ENCODE measurements at regions of chr11 and their contacts with region 1.

Region 1: GRCh38 chr11:18994860-18995259 is 55.6 kb upstream of the MRGPRX1 start:
- DNase-seq: no peak
- H3K4me3 ChIP-seq: no peak overlapping the region
- H3K27ac ChIP-seq: no peak overlapping the region
- H3K4me1 ChIP-seq: no peaks in the 10 kb centered on the region
- H3K27me3 ChIP-seq: 0 out of 2 replicates have a peak, but pooled peaks cover 14% of the 10 kb centered on the region
- CTCF ChIP-seq: no peak

Region 2: DNA sequence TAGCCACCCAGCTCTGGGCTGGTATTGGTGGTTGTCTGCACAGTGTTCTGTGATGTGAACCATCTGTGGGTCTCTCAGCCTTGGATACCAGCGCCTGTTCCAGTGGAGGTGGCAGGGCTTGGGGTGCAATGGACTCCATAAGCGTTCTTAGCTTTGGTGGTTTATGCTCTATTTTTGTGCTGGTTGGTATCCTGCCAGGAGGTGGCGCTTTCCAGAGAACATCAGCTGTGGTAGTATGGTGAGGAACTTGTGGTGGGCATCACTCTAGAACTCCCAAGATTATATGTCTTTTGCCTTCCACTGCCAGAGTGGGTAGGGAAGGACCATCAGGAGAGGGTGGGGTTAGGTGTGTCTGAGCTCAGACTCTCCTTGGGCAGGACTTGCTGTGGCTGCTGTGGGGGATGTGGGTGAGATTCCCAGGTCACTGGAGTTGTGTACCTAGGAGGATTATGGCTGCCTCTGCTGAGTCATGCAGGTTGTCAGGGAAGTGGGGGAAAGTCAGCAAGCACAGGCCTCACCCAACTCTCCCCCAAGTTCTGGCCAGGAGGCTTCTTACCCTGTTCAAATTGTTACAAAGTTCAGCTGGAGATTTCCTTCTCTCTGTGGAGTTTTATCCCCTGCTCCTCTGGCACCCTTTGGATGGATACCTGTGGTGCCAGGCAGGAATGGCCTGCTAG is 18.5 kb after region 1 on chr11:
- CTCF ChIA-PET with region 1: no interaction called
- POLR2A ChIA-PET with region 1: no interaction called
- intact Hi-C with region 1: loop called (anchors 2 kb)
- DNase-seq: peak; percentile 8 to 38
- H3K4me3 ChIP-seq: no peak overlapping the region
- H3K27ac ChIP-seq: peak overlapping the region; percentile 56
- H3K4me1 ChIP-seq: peaks cover 23% of the 10 kb centered on the region
- H3K27me3 ChIP-seq: no peaks in the 10 kb centered on the region
- CTCF ChIP-seq: no peak; the same call in 1 of the 2 replicates